Natural killer cell (primary cell): ENCODE measurements at regions of chr17 and their contacts with region 1.

Region 1: GRCh38 chr17:49180303-49180702 is 30.1 kb downstream of the GNGT2 start:
- DNase-seq: peak; percentile 66 to 84
- ATAC-seq: peak; percentile 69 to 73 (median 72)
- H3K4me3 ChIP-seq: no peak overlapping the region
- H3K4me3 Mint-ChIP-seq: peak overlapping the region; percentile 67
- H3K27ac ChIP-seq: no peak overlapping the region
- H3K27ac Mint-ChIP-seq: peak overlapping the region in 1 of 2 donors; percentile 56
- H3K4me1 ChIP-seq: peaks cover 16% of the 10 kb centered on the region
- H3K4me1 Mint-ChIP-seq: peaks cover 9 to 13% of the 10 kb centered on the region in 2 donors
- H3K27me3 ChIP-seq: no peaks in the 10 kb centered on the region
- H3K27me3 Mint-ChIP-seq: peaks cover 3% of the 10 kb centered on the region in 2 donors
- CTCF ChIP-seq: peak; percentile 98

Region 2: GRCh38 chr17:48860034-48860433 is 320.3 kb before region 1 on chr17:
- intact Hi-C with region 1: no loop called
- DNase-seq: no peak
- ATAC-seq: no peak
- H3K4me3 ChIP-seq: no peak overlapping the region
- H3K4me3 Mint-ChIP-seq: no peak overlapping the region
- H3K27ac ChIP-seq: no peak overlapping the region
- H3K27ac Mint-ChIP-seq: no peak overlapping the region
- H3K4me1 ChIP-seq: no peaks in the 10 kb centered on the region
- H3K4me1 Mint-ChIP-seq: no peaks in the 10 kb centered on the region
- H3K27me3 ChIP-seq: no peaks in the 10 kb centered on the region
- H3K27me3 Mint-ChIP-seq: no peaks in the 10 kb centered on the region
- CTCF ChIP-seq: peak; percentile 10

Region 3: DNA sequence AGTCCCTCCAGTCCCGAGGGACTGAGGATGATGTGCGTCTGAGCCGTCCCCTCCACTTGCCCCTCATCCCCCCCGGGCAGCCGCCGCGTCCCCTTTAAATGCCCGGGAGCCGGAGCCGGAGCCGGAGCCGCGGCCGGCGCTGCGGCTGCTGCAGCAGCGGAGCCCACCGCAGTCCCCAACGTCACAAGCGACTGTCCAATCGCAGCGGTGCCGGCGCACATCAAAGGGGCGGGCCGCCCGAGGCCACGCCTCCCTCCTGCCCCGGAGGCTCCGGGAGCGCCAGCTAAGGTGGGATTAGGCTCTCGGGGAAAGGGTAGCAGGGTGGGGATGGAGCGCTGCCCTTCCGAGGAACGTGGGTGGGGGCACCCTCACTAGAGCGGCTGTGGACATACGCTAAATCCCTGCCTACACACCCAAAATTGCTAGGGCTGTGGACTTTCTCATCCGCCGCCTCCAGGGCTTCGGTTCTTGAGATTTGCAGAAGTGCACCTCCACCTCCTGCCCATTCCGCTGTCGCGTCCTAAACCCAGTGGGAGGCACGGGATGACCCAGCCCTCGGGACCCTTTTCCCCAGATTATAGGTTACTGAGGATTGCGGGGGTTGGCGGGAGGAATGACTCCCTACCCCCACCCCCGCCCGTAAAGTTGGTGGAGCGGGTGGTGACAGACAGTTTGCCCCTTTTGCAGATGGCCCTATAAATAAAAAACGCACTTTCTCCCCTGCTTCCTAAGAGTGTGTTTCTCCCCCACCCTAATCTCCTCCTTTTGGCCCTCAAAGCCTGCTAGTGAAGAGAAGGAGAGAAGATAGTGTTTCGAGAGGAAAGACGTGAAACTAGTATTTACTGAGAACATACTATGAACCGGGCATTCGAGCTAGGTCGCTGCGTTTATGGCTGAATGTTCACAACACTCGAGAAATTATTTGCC is 50.6 kb after region 1 on chr17 and contains the start of gene PHOSPHO1:
- intact Hi-C with region 1: loop called (anchors 1 kb)
- DNase-seq: peak; percentile 88 to 95
- ATAC-seq: peak; percentile 91 to 95 (median 95)
- H3K4me3 ChIP-seq: peak within 1 kb of the TSS; percentile 63
- H3K4me3 Mint-ChIP-seq: peak within 1 kb of the TSS; percentile 91
- H3K27ac ChIP-seq: no peak within 1 kb of the TSS
- H3K27ac Mint-ChIP-seq: peak within 1 kb of the TSS; percentile 35 to 59
- H3K4me1 ChIP-seq: peaks cover 37% of the 10 kb centered on the region
- H3K4me1 Mint-ChIP-seq: peaks cover 18 to 49% of the 10 kb centered on the region in 2 donors
- H3K27me3 ChIP-seq: no peaks in the 10 kb centered on the region
- H3K27me3 Mint-ChIP-seq: no peaks in the 10 kb centered on the region
- CTCF ChIP-seq: no peak
- total RNA-seq, gene PHOSPHO1: 1.7 TPM in 1 of 3 donors, not detected in the others

Region 4: DNA sequence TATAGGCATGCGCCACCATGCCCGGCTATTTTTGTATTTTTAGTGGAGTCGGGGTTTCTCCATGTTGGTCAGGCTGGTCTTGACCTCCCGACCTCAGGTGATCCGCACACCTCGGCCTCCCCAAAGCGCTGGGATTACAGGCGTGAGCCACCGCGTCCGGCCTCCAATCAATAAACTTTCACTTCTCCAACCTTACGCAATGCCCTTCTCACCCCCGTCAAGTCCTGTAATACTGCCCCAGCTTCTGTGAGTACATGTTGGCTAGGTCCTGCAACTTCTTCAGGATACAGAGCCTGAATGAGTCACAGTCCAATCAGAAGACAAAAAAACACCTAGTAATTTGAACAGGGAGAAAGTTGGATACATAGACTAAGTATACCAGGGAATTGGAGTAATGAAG is 97.3 kb after region 1 on chr17:
- intact Hi-C with region 1: loop called (anchors 1 kb)
- DNase-seq: no peak
- ATAC-seq: no peak
- H3K4me3 ChIP-seq: no peak overlapping the region
- H3K4me3 Mint-ChIP-seq: no peak overlapping the region
- H3K27ac ChIP-seq: no peak overlapping the region
- H3K27ac Mint-ChIP-seq: no peak overlapping the region
- H3K4me1 ChIP-seq: no peaks in the 10 kb centered on the region
- H3K4me1 Mint-ChIP-seq: no peaks in the 10 kb centered on the region
- H3K27me3 ChIP-seq: no peaks in the 10 kb centered on the region
- H3K27me3 Mint-ChIP-seq: no peaks in the 10 kb centered on the region
- CTCF ChIP-seq: no peak

Region 5: DNA sequence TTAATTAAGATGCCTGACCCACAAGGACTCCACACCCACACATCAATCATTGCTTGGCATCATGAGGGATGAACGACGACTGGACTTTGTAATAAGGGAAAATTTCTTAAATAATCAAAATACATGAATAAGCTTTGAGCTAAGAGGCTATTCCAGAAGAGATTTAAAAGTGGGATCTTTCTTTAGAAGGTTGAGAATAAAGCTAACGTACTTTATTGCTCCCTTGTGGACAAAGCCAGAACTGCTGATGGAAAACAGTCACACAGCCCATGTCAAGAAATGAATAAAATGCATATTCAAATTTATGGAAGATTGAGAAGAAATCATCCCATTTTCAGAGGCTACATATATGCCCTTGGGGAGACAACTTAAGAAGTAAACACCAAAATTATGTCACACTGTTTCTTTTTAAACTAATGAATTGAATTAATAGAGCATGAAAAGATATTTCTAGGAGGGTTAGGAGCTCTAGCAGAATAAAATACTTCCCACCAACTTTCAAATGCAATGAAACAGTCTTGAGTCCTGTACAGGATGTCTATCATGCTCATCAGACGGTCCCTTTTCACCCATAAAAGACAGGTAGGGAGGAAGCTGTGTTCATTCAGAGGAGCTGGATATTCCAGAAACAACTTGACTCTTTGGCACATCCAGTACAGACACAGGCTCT is 110.5 kb after region 1 on chr17:
- intact Hi-C with region 1: loop called (anchors 2 kb)
- DNase-seq: peak in 1 of 2 donors; percentile 54
- ATAC-seq: peak in 1 of 3 donors; percentile 48
- H3K4me3 ChIP-seq: no peak overlapping the region
- H3K4me3 Mint-ChIP-seq: no peak overlapping the region
- H3K27ac ChIP-seq: no peak overlapping the region
- H3K27ac Mint-ChIP-seq: peak overlapping the region in 1 of 2 donors; percentile 18
- H3K4me1 ChIP-seq: no peaks in the 10 kb centered on the region
- H3K4me1 Mint-ChIP-seq: peaks cover 0 to 5% of the 10 kb centered on the region in 2 donors
- H3K27me3 ChIP-seq: no peaks in the 10 kb centered on the region
- H3K27me3 Mint-ChIP-seq: no peaks in the 10 kb centered on the region
- CTCF ChIP-seq: peak; percentile 65

Region 6: DNA sequence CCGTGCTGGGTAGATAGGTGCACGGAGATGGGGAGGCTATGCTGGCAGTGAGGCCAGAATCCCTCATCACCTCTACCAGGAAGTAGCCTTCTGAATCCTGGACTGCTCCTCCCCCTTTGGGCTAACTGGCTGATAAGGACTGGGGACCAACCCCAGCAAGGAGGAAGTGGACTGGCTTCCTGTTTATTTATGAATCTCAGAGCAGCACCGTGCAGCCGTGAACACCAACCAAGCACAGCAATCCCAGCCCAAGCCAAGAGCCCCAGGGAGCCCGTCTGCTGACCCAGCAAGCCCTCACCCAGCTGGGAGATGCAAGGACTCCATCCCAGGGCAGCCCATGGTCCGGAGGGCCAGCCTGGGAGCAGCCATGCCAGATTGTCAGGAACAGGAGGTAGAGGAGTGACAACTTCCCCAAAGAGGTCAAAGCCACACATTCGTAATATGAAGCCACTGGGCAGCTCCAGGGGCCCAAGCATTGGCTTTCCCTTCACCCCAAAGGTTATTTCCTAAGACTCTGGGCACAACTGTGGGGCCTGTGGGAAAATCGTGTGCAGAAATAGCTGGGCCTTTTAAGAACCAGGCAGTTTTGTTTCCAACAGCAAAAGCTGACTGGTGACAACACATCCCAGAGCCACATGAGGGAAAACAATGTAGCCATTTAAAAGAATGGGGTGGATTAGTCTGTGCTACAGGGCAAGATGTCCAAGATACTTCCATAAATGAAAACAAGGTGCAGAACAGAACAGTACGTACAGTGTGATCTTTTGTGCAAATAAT is 210.4 kb after region 1 on chr17:
- intact Hi-C with region 1: loop called (anchors 10 kb)
- DNase-seq: peak in 1 of 2 donors; percentile 46
- ATAC-seq: peak in 2 of 3 donors; percentile 8 to 58
- H3K4me3 ChIP-seq: no peak overlapping the region
- H3K4me3 Mint-ChIP-seq: peak overlapping the region; percentile 89
- H3K27ac ChIP-seq: peak overlapping the region; percentile 90
- H3K27ac Mint-ChIP-seq: peak overlapping the region; percentile 97 to 98
- H3K4me1 ChIP-seq: peaks cover 68% of the 10 kb centered on the region
- H3K4me1 Mint-ChIP-seq: peaks cover 52 to 56% of the 10 kb centered on the region in 2 donors
- H3K27me3 ChIP-seq: no peaks in the 10 kb centered on the region
- H3K27me3 Mint-ChIP-seq: no peaks in the 10 kb centered on the region
- CTCF ChIP-seq: no peak